PC-9 (cell line): ENCODE measurements at regions of chr3 and their contacts with region 1.

Region 1: DNA sequence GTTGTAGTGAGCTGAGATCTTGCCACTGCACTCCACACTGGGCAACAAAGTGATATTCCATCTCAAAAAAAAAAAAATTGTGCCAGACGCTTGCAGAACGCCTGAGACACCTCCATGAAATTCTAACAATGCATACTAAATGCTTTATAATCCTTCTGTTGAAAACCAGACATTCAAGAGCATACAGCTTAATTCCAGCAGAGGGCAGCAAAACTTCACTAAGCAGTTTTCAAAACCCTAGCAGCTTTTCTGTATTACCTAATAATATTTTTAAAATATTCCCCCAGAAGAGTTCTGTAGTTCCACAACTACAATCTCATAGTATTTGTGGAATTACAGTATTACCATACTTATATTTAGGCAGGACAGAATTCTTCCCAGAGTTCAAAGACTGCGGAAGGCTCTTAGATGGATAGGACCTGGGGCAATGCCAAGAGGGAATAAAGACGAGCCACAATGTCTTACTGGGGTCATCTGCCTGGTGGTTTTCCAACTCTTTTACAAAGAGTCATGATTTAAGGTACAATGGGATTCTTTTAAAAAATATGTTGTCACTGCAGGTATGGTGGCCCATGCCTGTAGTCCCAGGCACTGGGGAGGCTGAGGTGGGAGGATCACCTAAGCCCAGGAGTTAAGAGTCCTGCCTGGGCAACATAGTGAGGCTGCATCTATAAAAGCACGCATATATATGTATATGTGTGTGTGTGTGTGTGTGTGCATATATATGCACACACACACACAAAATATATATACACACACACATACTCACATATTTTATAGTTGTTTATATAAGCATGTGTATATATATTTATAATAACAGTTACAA is 19.6 kb upstream of the TASOR start:
- DNase-seq: peak; percentile 25 to 53
- H3K4me3 ChIP-seq: no peak overlapping the region
- H3K27ac ChIP-seq: no peak overlapping the region
- H3K4me1 ChIP-seq: no peaks in the 10 kb centered on the region
- H3K27me3 ChIP-seq: no peaks in the 10 kb centered on the region
- CTCF ChIP-seq: peak; percentile 84

Region 2: DNA sequence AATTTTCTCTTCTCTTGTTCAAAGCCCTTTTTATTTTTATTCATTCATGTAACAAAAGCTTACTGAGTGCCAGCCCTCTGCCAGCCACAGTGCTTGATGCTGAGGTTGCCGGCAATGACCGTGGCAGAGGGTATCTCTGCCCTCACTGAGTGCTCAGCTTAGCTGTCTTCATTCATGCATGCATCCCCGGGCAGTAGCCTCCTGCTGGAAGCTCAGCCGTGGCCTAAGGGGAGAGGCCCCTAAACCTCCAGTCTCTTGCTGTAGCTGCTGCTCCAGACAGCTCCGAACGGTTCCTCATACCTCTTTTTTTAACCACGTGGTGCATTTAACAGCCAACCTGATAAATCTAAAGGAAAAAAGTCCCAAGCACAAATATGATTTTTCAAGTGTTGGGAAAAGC is 180.3 kb before region 1 on chr3:
- CTCF ChIA-PET with region 1: no interaction called
- POLR2A ChIA-PET with region 1: no interaction called
- intact Hi-C with region 1: no loop called
- DNase-seq: no peak
- H3K4me3 ChIP-seq: no peak overlapping the region
- H3K27ac ChIP-seq: no peak overlapping the region
- H3K4me1 ChIP-seq: no peaks in the 10 kb centered on the region
- H3K27me3 ChIP-seq: peaks cover 20% of the 10 kb centered on the region
- CTCF ChIP-seq: no peak

Region 3: DNA sequence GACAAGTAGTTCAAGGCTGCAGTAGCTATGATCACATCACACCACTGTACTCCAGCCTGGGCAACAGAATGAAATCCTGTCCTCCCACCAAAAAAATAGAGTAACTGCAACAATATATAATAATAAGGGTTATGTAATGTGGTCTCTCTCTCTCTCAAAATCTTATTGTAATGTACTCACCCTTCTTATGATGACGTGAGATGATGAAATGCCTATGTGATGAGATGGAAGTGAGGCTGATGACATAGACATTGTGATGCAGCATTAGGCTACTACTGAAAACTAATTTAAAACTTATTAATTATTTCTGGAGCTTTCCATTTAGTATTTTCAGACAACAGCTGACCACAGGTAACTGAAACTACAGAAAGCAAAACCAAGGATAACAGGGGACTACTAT is 47.0 kb before region 1 on chr3:
- CTCF ChIA-PET with region 1: interaction called, 11 read pairs
- POLR2A ChIA-PET with region 1: no interaction called
- intact Hi-C with region 1: no loop called
- DNase-seq: no peak
- H3K4me3 ChIP-seq: no peak overlapping the region
- H3K27ac ChIP-seq: no peak overlapping the region
- H3K4me1 ChIP-seq: no peaks in the 10 kb centered on the region
- H3K27me3 ChIP-seq: no peaks in the 10 kb centered on the region
- CTCF ChIP-seq: no peak

Region 4: DNA sequence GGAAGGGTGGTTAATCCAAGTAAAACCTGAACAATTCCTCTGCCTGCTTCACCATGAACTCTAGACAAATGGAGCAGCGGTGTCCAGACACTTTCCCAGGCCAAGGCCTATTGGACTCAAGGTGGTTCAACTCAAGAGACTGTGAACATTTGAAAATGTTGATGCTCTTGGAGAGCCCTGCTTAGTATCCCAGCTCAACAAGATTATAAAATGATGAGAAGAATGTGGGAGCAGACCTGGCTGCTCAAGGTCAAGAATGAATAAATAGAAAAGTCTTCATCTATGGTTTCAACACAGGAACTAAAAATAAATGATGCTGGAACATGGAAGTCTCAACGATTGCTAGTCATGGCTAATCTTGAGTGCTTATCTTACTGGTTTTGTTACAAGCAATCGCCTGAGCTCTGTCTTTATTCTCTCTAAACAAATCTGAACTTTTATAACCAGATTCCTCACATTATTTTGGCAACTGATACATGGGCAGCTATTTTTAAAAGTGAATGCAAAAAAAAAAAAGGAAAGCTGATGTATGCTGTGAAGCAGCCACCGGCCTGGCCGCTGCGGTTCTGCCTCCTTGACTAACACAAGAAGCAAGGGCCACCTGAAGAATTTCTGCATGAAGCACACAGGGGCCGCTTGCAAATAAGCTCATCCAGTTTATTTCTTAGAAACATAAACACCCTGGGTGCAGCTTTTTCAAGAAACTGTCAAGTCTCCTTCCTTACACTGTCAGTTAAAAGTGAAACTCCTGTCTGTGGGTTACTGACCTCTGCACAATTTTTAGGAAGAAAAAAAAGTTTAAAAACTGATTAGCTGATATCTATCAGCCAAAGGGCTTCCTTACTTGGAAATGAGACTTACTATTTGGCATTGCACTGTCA is 219.1 kb after region 1 on chr3:
- CTCF ChIA-PET with region 1: no interaction called
- POLR2A ChIA-PET with region 1: interaction called, 14 read pairs
- intact Hi-C with region 1: no loop called
- DNase-seq: no peak
- H3K4me3 ChIP-seq: no peak overlapping the region
- H3K27ac ChIP-seq: no peak overlapping the region
- H3K4me1 ChIP-seq: peaks cover 16% of the 10 kb centered on the region
- H3K27me3 ChIP-seq: no peaks in the 10 kb centered on the region
- CTCF ChIP-seq: no peak

Region 5: DNA sequence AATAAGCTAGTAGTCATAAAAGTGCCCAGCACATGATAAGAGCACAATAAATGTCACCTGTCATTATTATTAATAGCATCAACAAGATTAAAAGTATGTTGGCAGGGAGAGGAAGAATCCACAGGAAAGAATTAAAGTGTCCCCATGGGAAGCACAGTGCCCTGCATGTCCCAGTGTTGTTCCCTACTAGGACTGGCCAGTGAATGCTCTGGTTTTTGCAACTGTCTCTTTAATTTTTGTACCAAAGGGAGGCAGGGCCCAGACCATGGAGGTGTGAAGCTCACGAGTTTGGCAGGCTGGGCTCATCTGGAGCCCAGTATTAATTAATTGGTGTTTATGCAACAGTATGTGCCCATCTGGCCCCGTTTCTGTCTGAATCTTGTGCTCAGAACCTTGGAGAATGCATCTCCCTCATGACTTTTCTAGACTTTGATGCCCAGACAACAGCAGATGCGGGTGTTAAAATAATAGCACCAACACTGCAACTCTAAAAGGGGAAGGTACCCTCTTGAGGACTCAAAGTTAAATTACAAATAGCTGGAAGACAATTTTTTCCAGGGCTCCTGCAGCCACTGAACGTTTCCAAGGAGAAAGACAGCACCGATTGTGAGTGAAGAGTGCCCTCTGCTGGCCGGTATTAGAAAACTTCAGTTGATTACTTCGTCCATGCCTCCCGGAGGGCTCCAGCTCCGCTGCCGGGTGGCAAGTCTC is 285.9 kb after region 1 on chr3:
- CTCF ChIA-PET with region 1: interaction called, 14 read pairs
- POLR2A ChIA-PET with region 1: no interaction called
- intact Hi-C with region 1: loop called (anchors 1 kb)
- DNase-seq: peak in 1 of 2 experiments; percentile 50
- H3K4me3 ChIP-seq: no peak overlapping the region
- H3K27ac ChIP-seq: no peak overlapping the region
- H3K4me1 ChIP-seq: no peaks in the 10 kb centered on the region
- H3K27me3 ChIP-seq: no peaks in the 10 kb centered on the region
- CTCF ChIP-seq: peak; percentile 88

Region 6: GRCh38 chr3:57169872-57170623 is 467.3 kb after region 1 on chr3:
- CTCF ChIA-PET with region 1: interaction called, 12 read pairs
- POLR2A ChIA-PET with region 1: no interaction called
- intact Hi-C with region 1: loop called (anchors 5 kb)
- DNase-seq: peak; percentile 60 to 75
- H3K4me3 ChIP-seq: peak overlapping the region; percentile 54
- H3K27ac ChIP-seq: no peak overlapping the region
- H3K4me1 ChIP-seq: peaks cover 3% of the 10 kb centered on the region; the same call in 1 of the 2 replicates
- H3K27me3 ChIP-seq: no peaks in the 10 kb centered on the region
- CTCF ChIP-seq: peak; percentile 81